Mammary epithelial cell (primary cell): ENCODE measurements at regions of chr1 and their contacts with region 1.

Region 1: GRCh38 chr1:31155216-31155841 is 84.4 kb downstream of the NKAIN1 start:
- DNase-seq: peak; percentile 77
- H3K4me3 ChIP-seq: peak overlapping the region; percentile 39 to 78 (median 54)
- H3K27ac ChIP-seq: peak overlapping the region; percentile 75
- H3K4me1 ChIP-seq: peaks cover 30% of the 10 kb centered on the region
- H3K27me3 ChIP-seq: no peaks in the 10 kb centered on the region
- CTCF ChIP-seq: peak in 1 of 2 donors; percentile 48

Region 2: DNA sequence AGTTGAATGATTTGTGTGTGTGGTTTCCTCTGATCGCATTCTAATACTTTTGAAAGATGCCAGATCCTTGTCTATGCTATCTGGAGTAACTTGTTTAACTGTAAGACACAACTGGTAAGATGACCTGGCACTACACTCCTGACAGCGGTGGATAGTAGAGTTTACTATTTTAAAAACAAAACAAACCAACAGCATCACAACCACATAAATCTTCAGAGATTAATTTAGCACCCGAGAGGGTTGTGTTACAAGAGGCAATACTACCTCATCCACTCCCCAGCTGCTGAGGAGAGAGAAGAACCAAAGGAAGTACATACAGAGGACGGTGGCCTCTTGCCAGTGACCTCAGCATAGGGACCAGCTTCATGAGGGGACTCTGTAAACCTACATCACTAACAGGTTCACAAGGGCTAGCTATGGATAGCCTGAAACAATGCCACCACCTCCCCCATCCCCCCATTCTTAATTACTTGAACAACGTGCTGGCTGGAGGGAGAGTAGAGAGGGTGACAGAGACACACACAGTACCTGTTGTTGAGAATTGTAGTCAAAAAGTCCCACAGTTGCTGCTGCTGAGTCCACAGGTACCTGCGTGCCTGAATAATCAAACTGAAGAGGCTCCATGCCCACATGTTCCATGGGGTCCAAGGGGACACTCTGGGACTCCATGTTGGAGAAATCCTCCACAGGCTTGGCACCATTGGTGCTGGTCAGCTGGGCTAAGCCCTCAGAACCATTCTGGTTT is 163.3 kb before region 1 on chr1:
- CTCF ChIA-PET with region 1: no interaction called
- dilution Hi-C with region 1: no loop called
- in situ Hi-C with region 1: no loop called
- intact Hi-C with region 1: no loop called
- DNase-seq: no peak
- H3K4me3 ChIP-seq: no peak overlapping the region
- H3K27ac ChIP-seq: no peak overlapping the region
- H3K4me1 ChIP-seq: no peaks in the 10 kb centered on the region
- H3K27me3 ChIP-seq: no peaks in the 10 kb centered on the region
- CTCF ChIP-seq: no peak

Region 3: GRCh38 chr1:31010086-31010989 is 145.0 kb before region 1 on chr1:
- CTCF ChIA-PET with region 1: no interaction called
- dilution Hi-C with region 1: loop called (anchors 5 kb)
- in situ Hi-C with region 1: no loop called
- intact Hi-C with region 1: no loop called
- DNase-seq: peak; percentile 70
- H3K4me3 ChIP-seq: no peak overlapping the region
- H3K27ac ChIP-seq: peak overlapping the region; percentile 16
- H3K4me1 ChIP-seq: peaks cover 82% of the 10 kb centered on the region
- H3K27me3 ChIP-seq: no peaks in the 10 kb centered on the region
- CTCF ChIP-seq: no peak

Region 4: DNA sequence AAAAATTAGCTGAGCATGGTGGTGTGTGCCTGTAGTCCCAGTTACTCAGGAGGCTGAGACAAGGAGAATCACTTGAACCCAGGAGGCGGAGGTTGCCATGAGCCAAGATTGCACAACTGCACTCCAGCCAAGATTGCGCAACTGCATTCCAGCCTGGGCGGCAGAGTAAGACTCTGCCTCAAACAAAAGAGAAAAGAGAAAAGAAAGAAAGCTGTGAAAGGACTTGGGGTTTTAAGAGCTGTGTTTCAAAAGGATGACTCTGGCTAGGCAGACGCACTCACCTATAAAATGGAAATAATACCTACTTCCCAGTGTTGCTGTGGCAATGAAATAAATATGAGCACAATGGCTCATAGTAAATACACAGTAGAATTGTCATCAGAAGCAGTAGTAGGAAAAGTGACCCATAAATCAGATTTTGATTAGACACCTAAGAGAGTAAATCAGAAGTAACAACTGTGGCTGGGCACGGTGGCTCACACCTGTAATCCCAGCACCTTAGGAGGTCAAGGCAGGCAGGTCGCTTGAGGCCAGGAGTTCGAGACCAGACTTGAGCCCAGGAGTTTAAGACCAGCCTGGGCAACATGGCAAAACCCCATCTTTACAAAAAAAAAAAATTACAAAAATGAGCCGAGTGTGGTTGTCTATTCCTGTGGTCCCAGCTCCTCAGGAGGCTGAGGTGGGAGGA is 43.9 kb before region 1 on chr1:
- CTCF ChIA-PET with region 1: no interaction called
- dilution Hi-C with region 1: no loop called
- in situ Hi-C with region 1: no loop called
- intact Hi-C with region 1: loop called (anchors 5 kb)
- DNase-seq: peak; percentile 72
- H3K4me3 ChIP-seq: no peak overlapping the region
- H3K27ac ChIP-seq: peak overlapping the region; percentile 47
- H3K4me1 ChIP-seq: peaks cover 6% of the 10 kb centered on the region
- H3K27me3 ChIP-seq: no peaks in the 10 kb centered on the region
- CTCF ChIP-seq: no peak

Region 5: GRCh38 chr1:31214316-31215064 is 59.2 kb after region 1 on chr1:
- CTCF ChIA-PET with region 1: no interaction called
- dilution Hi-C with region 1: loop called (anchors 5 kb)
- in situ Hi-C with region 1: no loop called
- intact Hi-C with region 1: no loop called
- DNase-seq: no peak
- H3K4me3 ChIP-seq: no peak overlapping the region
- H3K27ac ChIP-seq: no peak overlapping the region
- H3K4me1 ChIP-seq: peaks cover 5% of the 10 kb centered on the region
- H3K27me3 ChIP-seq: no peaks in the 10 kb centered on the region
- CTCF ChIP-seq: no peak